ENCODE measurements at regions of chr6 and their contacts with region 1.

Region 1: DNA sequence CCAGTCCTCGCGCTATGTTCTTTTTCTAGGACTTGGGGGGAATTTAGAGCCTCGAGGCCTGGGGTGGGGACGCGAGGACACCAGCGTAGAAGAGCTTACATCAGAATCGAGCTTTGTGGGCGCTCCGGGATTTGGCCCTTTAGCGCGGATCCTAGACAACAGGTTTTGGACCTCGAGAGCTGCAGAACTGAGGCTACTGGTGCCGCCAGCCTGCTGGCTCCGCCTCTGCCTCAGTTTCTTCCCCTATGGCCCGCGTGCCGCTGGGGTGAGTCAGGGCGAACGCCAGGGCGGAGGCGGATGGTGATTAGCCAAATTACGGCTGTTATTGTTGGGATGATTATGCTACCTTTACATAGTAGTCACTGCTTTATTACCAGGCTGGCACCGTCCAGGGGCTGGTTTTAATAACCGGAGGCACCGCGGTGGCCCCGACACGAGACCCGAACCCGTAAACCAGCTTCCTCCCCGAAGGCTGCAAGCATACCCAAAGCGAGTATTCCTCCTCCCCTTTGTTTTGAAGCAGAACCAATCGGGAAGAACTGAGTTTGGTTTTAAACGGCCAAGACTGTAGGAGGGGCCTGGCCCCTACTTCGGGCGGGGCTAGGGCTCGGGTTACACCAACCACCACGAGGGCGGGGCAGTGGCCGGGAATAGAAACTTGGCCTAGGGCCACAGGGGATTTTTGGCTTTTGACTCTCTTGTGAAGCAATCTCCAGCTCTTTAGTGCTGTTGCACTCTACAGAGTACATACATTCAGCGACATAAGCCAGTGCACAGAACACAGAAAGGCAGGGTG is 639 bp upstream of the GTPBP2 start:
- DNase-seq: peak; percentile 95
- ATAC-seq: peak; percentile 88
- H3K4me3 ChIP-seq: peak overlapping the region; percentile 86 to 93
- H3K27ac ChIP-seq: peak overlapping the region; percentile 92
- H3K4me1 ChIP-seq: peaks cover 21% of the 10 kb centered on the region
- H3K27me3 ChIP-seq: no peaks in the 10 kb centered on the region
- CTCF ChIP-seq: no peak

Region 2: DNA sequence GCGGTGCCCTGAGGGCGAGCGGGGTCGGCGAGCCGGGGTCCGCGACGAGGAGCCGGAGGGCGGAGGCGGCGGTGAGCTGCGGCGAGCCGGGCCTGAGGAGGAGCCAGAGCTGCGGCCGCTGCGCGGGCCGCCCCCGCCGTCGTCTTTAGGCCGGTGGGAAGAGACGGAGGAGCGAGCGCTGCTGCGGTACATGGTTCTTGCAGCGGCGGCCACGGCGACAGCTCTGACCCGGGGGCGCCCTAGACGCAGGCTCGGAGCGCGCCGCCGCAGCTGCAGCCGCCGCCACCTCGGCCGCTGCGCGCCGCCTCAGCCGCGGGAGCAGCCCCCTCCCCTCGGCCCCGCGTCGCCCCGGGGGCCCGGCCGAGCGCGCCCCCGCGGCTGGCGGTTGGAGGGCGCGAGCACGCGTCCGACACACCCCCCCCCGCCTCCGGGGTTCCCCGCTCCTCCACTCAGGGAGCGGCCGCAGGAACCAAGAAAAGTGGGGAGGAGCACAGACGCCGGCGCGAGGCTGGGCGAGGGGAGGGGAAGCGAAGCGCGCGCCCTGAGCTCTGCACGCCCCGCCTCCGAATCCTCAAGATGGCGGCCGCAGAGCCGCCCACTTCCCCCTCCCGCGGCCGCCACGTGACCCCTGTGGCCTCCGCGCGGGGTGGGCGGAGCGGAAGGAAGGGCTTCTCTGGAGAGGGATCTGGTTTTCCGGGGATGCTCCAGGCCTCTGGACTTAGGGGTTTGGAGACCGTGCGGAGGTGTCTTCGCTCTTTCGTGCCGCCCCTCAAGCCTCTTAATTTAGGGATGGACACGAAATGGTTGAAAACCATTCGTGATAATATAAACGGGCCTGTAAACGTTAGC is 260.3 kb before region 1 on chr6 and contains the start of gene ZNF318:
- CTCF ChIA-PET with region 1: no interaction called
- POLR2A ChIA-PET with region 1: interaction called, 11 read pairs
- in situ Hi-C with region 1: no loop called
- intact Hi-C with region 1: no loop called
- DNase-seq: peak; percentile 77
- ATAC-seq: peak; percentile 99
- H3K4me3 ChIP-seq: peak within 1 kb of the TSS; percentile 81 to 86
- H3K27ac ChIP-seq: peak within 1 kb of the TSS; percentile 96
- H3K4me1 ChIP-seq: peaks cover 10% of the 10 kb centered on the region
- H3K27me3 ChIP-seq: no peaks in the 10 kb centered on the region
- CTCF ChIP-seq: no peak; the same call in 1 of the 2 replicates
- total RNA-seq, gene ZNF318: 28.0 TPM

Region 3: DNA sequence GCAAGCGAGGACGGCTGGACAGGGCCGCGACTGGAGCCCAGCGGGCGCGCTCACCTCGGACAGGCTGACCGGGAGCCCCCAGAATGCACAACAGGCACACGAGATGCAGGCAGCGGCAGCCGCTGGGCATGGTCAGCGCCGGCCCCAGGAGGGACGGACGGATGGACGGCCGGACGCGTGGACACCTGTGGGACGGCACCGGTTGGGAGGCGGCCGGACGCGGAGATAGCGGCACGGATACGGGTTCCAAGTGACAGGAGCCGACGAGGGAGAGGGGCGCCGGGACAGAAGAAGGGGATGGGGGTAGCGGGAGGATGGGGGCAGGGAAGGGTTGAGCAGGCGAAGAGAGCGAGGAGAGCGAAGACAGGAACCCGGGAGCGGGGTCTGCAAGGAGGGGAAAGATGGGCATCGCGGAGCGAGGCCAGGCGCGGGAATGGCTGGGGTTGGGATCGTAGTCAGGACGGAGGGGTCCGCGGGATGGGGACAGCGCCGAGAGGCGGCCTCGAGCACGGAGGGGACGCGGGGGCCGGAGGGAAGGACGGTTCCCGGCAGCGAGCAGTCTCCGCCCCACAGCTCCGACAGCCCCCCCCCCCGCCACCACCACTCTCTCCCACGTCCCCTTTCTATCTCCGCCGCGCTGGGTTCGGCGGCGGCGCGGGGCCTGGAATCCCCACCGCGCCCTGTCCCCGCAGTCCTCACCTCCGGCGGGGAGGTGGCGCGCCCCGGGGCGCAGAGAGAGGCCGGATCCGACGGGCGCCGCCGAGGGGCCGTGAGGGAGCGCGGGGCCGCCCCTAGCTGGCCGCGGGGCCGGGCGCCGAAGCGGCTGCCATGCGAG is 174.8 kb before region 1 on chr6:
- CTCF ChIA-PET with region 1: no interaction called
- POLR2A ChIA-PET with region 1: interaction called, 10 read pairs
- in situ Hi-C with region 1: no loop called
- intact Hi-C with region 1: no loop called
- DNase-seq: no peak
- ATAC-seq: peak; percentile 82
- H3K4me3 ChIP-seq: peak overlapping the region; percentile 59 to 63
- H3K27ac ChIP-seq: peak overlapping the region; percentile 68
- H3K4me1 ChIP-seq: peaks cover 13% of the 10 kb centered on the region
- H3K27me3 ChIP-seq: no peaks in the 10 kb centered on the region
- CTCF ChIP-seq: peak; percentile 61

Region 4: DNA sequence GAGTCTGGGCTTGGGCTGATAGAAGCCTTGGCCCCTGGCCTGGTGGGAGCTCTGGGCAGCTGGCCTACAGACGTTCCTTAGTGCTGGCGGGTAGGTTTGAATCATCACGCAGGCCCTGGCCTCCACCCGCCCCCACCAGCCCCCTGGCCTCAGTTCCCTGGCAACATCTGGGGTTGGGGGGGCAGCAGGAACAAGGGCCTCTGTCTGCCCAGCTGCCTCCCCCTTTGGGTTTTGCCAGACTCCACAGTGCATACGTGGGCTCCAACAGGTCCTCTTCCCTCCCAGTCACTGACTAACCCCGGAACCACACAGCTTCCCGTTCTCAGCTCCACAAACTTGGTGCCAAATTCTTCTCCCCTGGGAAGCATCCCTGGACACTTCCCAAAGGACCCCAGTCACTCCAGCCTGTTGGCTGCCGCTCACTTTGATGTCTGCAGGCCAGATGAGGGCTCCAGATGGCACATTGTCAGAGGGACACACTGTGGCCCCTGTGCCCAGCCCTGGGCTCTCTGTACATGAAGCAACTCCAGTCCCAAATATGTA is 139.4 kb after region 1 on chr6:
- CTCF ChIA-PET with region 1: no interaction called
- POLR2A ChIA-PET with region 1: no interaction called
- in situ Hi-C with region 1: no loop called
- intact Hi-C with region 1: no loop called
- DNase-seq: no peak
- ATAC-seq: no peak
- H3K4me3 ChIP-seq: no peak overlapping the region; a peak in 1 of 4 replicates
- H3K27ac ChIP-seq: no peak overlapping the region
- H3K4me1 ChIP-seq: peaks cover 17% of the 10 kb centered on the region
- H3K27me3 ChIP-seq: no peaks in the 10 kb centered on the region
- CTCF ChIP-seq: no peak

Region 5: DNA sequence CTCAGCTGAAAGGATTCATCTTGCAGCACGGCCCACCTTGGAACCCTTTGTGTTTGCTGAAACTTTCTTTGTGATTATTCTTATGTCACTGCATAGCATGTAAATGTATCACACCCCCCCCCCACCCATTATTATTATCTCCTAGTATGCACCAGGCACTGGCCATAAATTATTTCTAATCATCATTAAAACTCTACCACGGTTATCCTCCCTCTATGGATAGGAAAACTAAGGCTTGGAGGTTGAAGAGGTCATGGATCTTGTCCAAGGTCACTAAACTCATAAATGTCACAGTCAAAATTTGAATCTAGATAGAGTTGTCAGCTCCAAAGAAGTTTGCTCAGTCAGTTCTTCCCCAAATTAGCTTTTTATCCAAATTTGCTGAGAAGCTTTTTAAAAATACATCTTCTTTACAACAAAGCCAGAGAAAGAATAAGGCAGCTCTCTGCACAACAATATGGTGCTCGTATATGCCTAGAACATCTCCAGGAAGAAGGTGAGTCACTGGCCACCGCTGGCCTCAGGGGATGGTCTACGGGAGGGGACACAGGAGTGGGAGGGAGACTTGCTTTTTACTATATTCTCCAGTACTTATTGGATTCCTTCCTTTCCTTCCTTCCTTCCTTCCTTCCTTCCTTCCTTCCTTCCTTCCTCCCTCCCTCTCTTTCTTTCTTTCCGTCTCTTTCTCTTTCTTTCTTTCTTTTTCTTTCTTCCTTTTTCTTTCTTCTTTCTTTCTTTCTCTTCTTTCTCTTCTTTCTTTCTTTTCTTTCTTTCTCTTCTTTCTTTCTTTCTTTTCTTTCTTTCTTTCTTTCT is 274.8 kb after region 1 on chr6:
- CTCF ChIA-PET with region 1: no interaction called
- POLR2A ChIA-PET with region 1: interaction called, 10 read pairs
- in situ Hi-C with region 1: no loop called
- intact Hi-C with region 1: no loop called
- DNase-seq: no peak
- ATAC-seq: no peak
- H3K4me3 ChIP-seq: no peak overlapping the region
- H3K27ac ChIP-seq: no peak overlapping the region
- H3K4me1 ChIP-seq: no peaks in the 10 kb centered on the region
- H3K27me3 ChIP-seq: no peaks in the 10 kb centered on the region
- CTCF ChIP-seq: no peak

Measured in Panc1 (cell line).